GM12878 (cell line): ENCODE measurements at regions of chr3 and their contacts with region 1.

Region 1: DNA sequence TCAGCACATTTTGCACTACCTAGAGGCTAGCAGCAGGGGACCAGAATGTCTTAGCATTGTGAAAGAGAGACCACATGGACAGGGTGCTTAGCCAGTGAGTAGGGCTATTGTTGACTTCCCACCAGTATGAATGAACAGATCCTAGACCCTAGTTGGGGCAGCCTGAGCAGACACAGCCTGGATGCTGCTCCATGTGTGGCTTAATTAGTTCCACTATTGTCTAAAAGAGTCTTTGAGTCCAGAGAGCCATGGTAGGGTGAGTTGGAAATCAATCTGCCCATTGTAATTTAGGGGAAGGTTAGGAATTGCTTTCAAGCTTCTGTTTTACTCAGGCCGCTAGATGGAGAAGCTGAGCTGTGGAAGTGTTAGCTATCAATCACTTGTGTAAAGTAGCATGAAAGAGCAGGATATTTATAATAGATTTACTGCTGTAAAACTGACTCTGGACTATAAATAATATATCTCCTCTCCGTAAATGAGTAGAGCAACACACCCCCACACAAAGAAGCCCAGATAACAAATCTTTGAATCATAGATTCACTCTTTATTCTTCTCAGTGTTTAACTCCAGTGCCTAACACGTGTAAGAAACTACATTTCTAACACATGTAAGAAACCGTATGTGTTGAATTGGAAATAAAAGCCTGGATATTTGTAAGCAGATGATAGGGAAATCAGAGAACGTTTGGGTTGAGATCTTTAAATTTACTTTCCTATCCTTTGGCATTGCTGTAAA is 4.1 kb upstream of the GCSAM start:
- DNase-seq: no peak
- ATAC-seq: peak; percentile 42
- H3K4me3 ChIP-seq: no peak overlapping the region
- H3K27ac ChIP-seq: peak overlapping the region; percentile 99
- H3K4me1 ChIP-seq: peaks cover 47% of the 10 kb centered on the region
- H3K27me3 ChIP-seq: no peaks in the 10 kb centered on the region
- CTCF ChIP-seq: peak; percentile 67 to 88 (median 81); a peak in 5 of 6 replicates
- EP300 ChIP-seq: 0 out of 4 replicates have a peak, but pooled peaks of 1 of the 2 experiments have one; percentile 32
- POLR2A ChIP-seq: peak; percentile 67
- RAD21 ChIP-seq: peak; percentile 94

Region 2: DNA sequence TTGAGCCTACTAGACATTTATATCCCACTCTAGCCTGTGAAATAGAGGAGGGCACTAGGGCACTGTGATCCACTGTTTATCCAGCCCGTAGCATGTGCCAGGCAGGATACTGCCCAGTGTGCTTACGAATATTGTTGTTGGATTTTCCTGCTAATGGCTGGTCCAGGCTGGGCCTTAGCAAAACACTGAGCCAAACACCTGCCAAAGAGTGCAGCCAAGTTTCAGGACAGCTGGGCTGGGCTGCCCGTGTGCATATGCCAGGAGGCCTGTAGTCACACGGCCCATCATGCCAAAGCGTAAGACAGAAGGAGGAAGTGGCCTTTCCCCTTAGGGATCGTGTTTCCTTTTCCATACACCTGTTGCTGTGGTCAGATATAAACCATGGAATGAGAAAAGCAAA is 212.8 kb before region 1 on chr3:
- CTCF ChIA-PET with region 1: no interaction called
- POLR2A ChIA-PET with region 1: no interaction called
- RAD21 ChIA-PET with region 1: no interaction called
- SMC1A ChIA-PET with region 1: no interaction called
- in situ Hi-C with region 1: no loop called
- intact Hi-C with region 1: no loop called
- DNase-seq: no peak
- ATAC-seq: no peak
- H3K4me3 ChIP-seq: no peak overlapping the region
- H3K27ac ChIP-seq: no peak overlapping the region
- H3K4me1 ChIP-seq: no peaks in the 10 kb centered on the region
- H3K27me3 ChIP-seq: no peaks in the 10 kb centered on the region
- CTCF ChIP-seq: no peak
- EP300 ChIP-seq: no peak
- POLR2A ChIP-seq: no peak
- RAD21 ChIP-seq: no peak

Region 3: GRCh38 chr3:112043603-112044201 is 93.4 kb before region 1 on chr3:
- CTCF ChIA-PET with region 1: no interaction called
- POLR2A ChIA-PET with region 1: no interaction called
- RAD21 ChIA-PET with region 1: no interaction called
- SMC1A ChIA-PET with region 1: no interaction called
- in situ Hi-C with region 1: no loop called
- intact Hi-C with region 1: no loop called
- DNase-seq: peak; percentile 8
- ATAC-seq: peak; percentile 95
- H3K4me3 ChIP-seq: no peak overlapping the region
- H3K27ac ChIP-seq: no peak overlapping the region
- H3K4me1 ChIP-seq: no peaks in the 10 kb centered on the region
- H3K27me3 ChIP-seq: peaks cover 0 to 6% of the 10 kb centered on the region in 2 experiments; a peak in 1 of 4 replicates
- CTCF ChIP-seq: peak; percentile 80 to 92 (median 86)
- EP300 ChIP-seq: no peak
- POLR2A ChIP-seq: no peak
- RAD21 ChIP-seq: peak; percentile 69

Region 4: GRCh38 chr3:112123548-112123947 is 13.6 kb before region 1 on chr3:
- CTCF ChIA-PET with region 1: interaction called, 226 read pairs
- POLR2A ChIA-PET with region 1: interaction called, 345 read pairs
- RAD21 ChIA-PET with region 1: interaction called, 457 read pairs
- SMC1A ChIA-PET with region 1: interaction called, 489 read pairs
- in situ Hi-C with region 1: no loop called
- intact Hi-C with region 1: no loop called
- DNase-seq: no peak
- ATAC-seq: no peak; the same call in 2 of the 3 replicates
- H3K4me3 ChIP-seq: no peak overlapping the region
- H3K27ac ChIP-seq: peak overlapping the region; percentile 91
- H3K4me1 ChIP-seq: peaks cover 83% of the 10 kb centered on the region
- H3K27me3 ChIP-seq: no peaks in the 10 kb centered on the region
- CTCF ChIP-seq: no peak
- EP300 ChIP-seq: no peak
- POLR2A ChIP-seq: no peak
- RAD21 ChIP-seq: 0 out of 2 replicates have a peak, but pooled peaks have one; percentile 2

Region 5: GRCh38 chr3:112327371-112327951 is 190.3 kb after region 1 on chr3:
- CTCF ChIA-PET with region 1: interaction called, 48 read pairs
- POLR2A ChIA-PET with region 1: interaction called, 10 read pairs
- RAD21 ChIA-PET with region 1: interaction called, 30 read pairs
- SMC1A ChIA-PET with region 1: interaction called, 43 read pairs
- in situ Hi-C with region 1: no loop called
- intact Hi-C with region 1: loop called (anchors 1 kb)
- DNase-seq: peak; percentile 79
- ATAC-seq: peak; percentile 100
- H3K4me3 ChIP-seq: no peak overlapping the region
- H3K27ac ChIP-seq: no peak overlapping the region
- H3K4me1 ChIP-seq: no peaks in the 10 kb centered on the region
- H3K27me3 ChIP-seq: no peaks in the 10 kb centered on the region
- CTCF ChIP-seq: peak; percentile 60 to 82 (median 64)
- EP300 ChIP-seq: no peak
- POLR2A ChIP-seq: no peak
- RAD21 ChIP-seq: peak; percentile 98

Region 6: DNA sequence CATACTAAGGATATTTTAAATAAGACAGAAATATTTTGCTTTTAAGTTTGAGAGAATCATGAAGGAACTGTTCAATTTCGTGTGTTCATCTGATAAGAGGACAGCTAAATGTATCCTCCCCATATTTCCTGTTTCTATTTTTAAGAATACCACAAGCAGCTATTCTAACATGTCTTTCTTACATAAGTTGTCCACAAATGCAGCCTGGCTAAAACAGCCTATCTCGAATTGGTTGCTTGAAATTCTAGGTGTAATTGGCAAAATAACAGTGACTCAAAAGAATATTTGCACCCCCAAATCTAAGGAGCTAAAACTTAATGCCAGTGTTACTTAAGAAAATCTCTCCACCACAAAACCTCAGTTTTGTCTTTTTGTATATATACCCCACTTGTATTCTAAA is 327.1 kb after region 1 on chr3:
- CTCF ChIA-PET with region 1: interaction called, 4 read pairs
- POLR2A ChIA-PET with region 1: interaction called, 6 read pairs
- RAD21 ChIA-PET with region 1: interaction called, 14 read pairs
- SMC1A ChIA-PET with region 1: interaction called, 9 read pairs
- in situ Hi-C with region 1: no loop called
- intact Hi-C with region 1: loop called (anchors 1 kb)
- DNase-seq: peak; percentile 67
- ATAC-seq: peak; percentile 45
- H3K4me3 ChIP-seq: peak overlapping the region; percentile 16; the same call in 1 of the 2 replicates
- H3K27ac ChIP-seq: peak overlapping the region; percentile 77
- H3K4me1 ChIP-seq: peaks cover 61% of the 10 kb centered on the region
- H3K27me3 ChIP-seq: no peaks in the 10 kb centered on the region
- CTCF ChIP-seq: no peak
- EP300 ChIP-seq: peak; percentile 10 to 78; a peak in 2 of 4 replicates
- POLR2A ChIP-seq: no peak
- RAD21 ChIP-seq: no peak

Region 7: DNA sequence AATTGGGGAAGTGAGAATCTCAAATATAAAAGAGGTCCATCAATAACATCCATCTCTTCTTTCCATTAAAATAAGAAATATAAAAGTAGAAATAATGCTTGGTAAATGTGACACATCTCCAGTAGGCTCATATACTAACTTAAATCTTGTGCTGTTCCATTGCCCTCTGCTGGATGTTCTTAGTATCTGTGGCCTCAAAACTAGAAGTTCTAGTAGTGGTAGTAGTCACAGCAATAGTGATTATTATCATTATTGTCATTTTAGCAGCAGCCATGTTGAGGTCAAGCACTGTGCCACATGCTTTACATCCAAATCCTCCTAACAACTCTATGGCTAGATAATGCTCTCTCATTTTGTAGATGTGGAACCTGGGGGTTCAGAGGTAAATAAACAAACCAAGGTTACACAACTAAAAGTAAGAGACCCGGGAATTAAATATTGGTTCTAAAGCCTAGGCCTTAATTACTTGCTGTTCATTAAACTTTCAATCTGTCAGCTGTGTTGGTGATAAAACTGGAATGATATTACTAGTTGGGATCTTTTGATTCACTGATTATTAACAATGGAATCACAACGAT is 382.4 kb after region 1 on chr3:
- CTCF ChIA-PET with region 1: interaction called, 39 read pairs
- POLR2A ChIA-PET with region 1: interaction called, 4 read pairs
- RAD21 ChIA-PET with region 1: interaction called, 20 read pairs
- SMC1A ChIA-PET with region 1: interaction called, 52 read pairs
- in situ Hi-C with region 1: no loop called
- intact Hi-C with region 1: loop called (anchors 1 kb)
- DNase-seq: peak; percentile 68
- ATAC-seq: peak; percentile 83
- H3K4me3 ChIP-seq: no peak overlapping the region
- H3K27ac ChIP-seq: peak overlapping the region; percentile 54
- H3K4me1 ChIP-seq: peaks cover 4% of the 10 kb centered on the region; the same call in 1 of the 2 replicates
- H3K27me3 ChIP-seq: no peaks in the 10 kb centered on the region
- CTCF ChIP-seq: peak; percentile 68 to 72 (median 70)
- EP300 ChIP-seq: no peak
- POLR2A ChIP-seq: no peak
- RAD21 ChIP-seq: peak; percentile 92